ENCODE measurements at regions of chr18 and their contacts with region 1.

Region 1: GRCh38 chr18:75209129-75209950 is at the start of gene PTGR3:
- DNase-seq: peak; percentile 40
- ATAC-seq: peak; percentile 56
- H3K4me3 ChIP-seq: peak within 1 kb of the TSS; percentile 96
- H3K27ac ChIP-seq: peak within 1 kb of the TSS; percentile 86
- H3K4me1 ChIP-seq: peaks cover 6% of the 10 kb centered on the region; the same call in 1 of the 2 replicates
- H3K27me3 ChIP-seq: no peaks in the 10 kb centered on the region
- CTCF ChIP-seq: no peak
- EP300 ChIP-seq: no peak
- POLR2A ChIP-seq: peak; percentile 74
- RAD21 ChIP-seq: no peak
- polyA plus RNA-seq, gene PTGR3: 6.2 to 8.8 TPM

Region 2: DNA sequence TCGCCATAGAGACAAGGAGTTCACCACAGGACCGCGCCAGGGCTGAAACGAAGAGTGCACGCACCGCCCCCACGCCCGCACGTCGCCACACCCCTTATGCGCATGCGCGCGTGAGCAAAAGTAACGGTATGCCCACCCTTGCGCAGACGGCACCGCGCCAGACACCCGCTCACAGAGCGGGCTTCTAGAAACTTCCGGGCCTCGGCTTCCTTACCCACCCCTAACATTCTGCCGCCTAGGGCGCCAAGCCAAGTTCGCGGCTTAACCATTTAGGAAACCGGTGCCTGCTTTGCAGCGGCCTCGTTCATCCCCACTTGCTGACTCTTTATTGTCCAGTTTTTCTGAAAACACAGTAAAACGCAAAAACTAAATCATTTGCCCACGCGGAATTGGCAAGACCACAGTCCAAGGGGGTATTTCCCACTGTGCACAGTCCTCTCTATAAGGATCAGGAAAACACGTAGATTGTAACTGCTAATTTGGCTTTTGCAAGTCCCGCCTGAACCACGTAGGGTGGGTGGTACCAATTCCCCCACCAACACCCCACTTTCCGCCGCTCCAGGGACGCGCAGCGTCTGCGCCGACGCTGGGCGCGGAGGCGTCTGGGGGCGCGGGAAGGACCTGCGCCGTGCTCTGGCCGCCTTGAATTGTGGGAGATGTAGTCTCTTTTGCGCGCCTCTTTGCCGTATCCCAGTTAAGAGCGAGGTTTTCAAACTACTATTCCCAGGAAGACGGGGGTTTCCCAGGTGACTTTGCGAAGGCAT is 1061.4 kb before region 1 on chr18 and contains the starts of genes FBXO15 and TIMM21:
- CTCF ChIA-PET with region 1: no interaction called
- POLR2A ChIA-PET with region 1: no interaction called
- RAD21 ChIA-PET with region 1: no interaction called
- SMC1A ChIA-PET with region 1: no interaction called
- in situ Hi-C with region 1: no loop called
- intact Hi-C with region 1: loop called (anchors 5 kb)
- DNase-seq: peak; percentile 94
- ATAC-seq: peak; percentile 93
- H3K4me3 ChIP-seq: peak within 1 kb of the TSS; percentile 92
- H3K27ac ChIP-seq: peak within 1 kb of the TSS; percentile 88
- H3K4me1 ChIP-seq: peaks cover 6% of the 10 kb centered on the region; the same call in 1 of the 2 replicates
- H3K27me3 ChIP-seq: no peaks in the 10 kb centered on the region
- CTCF ChIP-seq: no peak
- EP300 ChIP-seq: no peak
- POLR2A ChIP-seq: peak; percentile 77
- RAD21 ChIP-seq: no peak
- polyA plus RNA-seq, gene FBXO15: 0.20 to 0.24 TPM
- polyA plus RNA-seq, gene TIMM21: 111 to 136 TPM

Region 3: DNA sequence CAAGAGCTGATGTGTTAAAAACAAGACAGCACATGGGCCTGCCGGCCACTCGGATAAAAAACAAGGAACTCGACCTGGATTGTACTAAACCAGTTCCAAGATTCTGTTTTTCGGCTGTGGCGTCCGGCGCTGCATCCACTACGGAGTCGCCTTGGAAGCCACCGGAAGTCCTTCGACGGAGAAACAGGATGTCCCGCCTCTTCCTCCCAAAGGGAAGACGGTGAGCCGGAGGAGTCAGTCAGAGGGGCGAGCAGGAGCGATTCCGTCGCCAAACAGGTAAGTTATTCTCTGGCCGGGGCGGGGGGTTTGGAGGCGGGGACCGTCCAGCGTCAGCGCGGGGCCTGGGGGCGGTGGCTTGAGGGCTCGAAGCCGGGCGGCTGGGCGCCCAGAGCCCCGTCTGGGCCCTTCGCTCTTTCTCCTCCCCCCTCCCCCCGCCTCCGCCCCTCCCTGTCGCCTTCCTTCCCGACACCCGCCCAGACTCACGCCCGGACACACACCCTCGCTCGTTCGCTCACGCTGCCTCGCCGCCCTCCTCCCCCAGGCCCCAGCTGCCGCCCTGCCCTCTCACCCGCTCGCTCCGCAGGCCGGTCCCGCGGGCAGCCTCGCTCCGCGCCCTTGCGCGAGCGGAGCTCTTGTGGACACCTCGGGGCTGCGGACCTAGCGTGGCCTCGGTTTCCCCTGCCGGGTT is 611.5 kb before region 1 on chr18 and contains the start of gene ZNF407:
- CTCF ChIA-PET with region 1: no interaction called
- POLR2A ChIA-PET with region 1: interaction called, 4 read pairs
- RAD21 ChIA-PET with region 1: no interaction called
- SMC1A ChIA-PET with region 1: no interaction called
- in situ Hi-C with region 1: no loop called
- intact Hi-C with region 1: loop called (anchors 5 kb)
- DNase-seq: peak; percentile 61
- ATAC-seq: peak; percentile 90
- H3K4me3 ChIP-seq: peak within 1 kb of the TSS; percentile 99
- H3K27ac ChIP-seq: peak within 1 kb of the TSS; percentile 99
- H3K4me1 ChIP-seq: peaks cover 7% of the 10 kb centered on the region
- H3K27me3 ChIP-seq: no peaks in the 10 kb centered on the region
- CTCF ChIP-seq: no peak
- EP300 ChIP-seq: no peak
- POLR2A ChIP-seq: peak; percentile 70; the same call in 1 of the 2 replicates
- RAD21 ChIP-seq: no peak
- polyA plus RNA-seq, gene ZNF407: 0.69 to 0.88 TPM

Region 4: DNA sequence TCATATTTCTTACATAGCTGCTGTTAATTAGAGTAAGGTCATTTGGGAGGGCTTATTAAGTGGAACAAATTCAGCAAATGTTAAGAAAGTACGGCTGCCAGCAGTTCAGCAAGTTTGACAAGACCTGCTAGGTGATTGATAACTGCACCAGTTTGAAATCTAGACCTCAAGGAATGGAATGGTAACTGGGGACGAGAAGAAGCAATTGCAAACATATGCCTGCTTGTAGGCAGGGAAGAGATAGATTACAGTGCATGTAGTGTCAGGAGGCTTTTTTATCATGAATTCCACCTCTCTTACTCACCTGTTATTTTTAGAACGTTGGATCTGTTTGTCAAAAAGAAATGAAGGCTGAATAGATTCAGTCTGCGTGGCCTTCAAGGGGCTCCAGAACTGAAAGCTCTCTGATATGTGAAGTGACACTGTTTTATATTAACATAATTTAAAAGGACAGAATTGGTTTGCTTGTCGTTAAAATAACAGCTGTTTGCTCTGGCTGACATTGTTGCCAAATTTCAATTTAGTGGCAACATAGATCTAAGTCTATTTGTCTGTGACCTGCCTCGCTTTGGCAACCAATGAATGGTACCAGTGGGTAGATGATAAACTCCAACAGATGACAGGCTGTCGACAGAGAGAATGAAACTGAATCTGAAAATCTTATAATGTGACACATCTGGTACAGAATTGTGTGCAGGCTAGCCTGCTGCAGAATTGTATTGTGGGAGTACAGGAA is 412.3 kb before region 1 on chr18:
- CTCF ChIA-PET with region 1: no interaction called
- POLR2A ChIA-PET with region 1: no interaction called
- RAD21 ChIA-PET with region 1: no interaction called
- SMC1A ChIA-PET with region 1: no interaction called
- in situ Hi-C with region 1: no loop called
- intact Hi-C with region 1: loop called (anchors 10 kb)
- DNase-seq: peak; percentile 40
- ATAC-seq: peak; percentile 99
- H3K4me3 ChIP-seq: peak overlapping the region; percentile 51
- H3K27ac ChIP-seq: 0 out of 2 replicates have a peak overlapping the region, but pooled peaks have one; percentile 17
- H3K4me1 ChIP-seq: peaks cover 16% of the 10 kb centered on the region; the same call in 1 of the 2 replicates
- H3K27me3 ChIP-seq: no peaks in the 10 kb centered on the region
- CTCF ChIP-seq: no peak
- EP300 ChIP-seq: no peak; a peak in 1 of 4 replicates
- POLR2A ChIP-seq: no peak
- RAD21 ChIP-seq: no peak

Region 5: DNA sequence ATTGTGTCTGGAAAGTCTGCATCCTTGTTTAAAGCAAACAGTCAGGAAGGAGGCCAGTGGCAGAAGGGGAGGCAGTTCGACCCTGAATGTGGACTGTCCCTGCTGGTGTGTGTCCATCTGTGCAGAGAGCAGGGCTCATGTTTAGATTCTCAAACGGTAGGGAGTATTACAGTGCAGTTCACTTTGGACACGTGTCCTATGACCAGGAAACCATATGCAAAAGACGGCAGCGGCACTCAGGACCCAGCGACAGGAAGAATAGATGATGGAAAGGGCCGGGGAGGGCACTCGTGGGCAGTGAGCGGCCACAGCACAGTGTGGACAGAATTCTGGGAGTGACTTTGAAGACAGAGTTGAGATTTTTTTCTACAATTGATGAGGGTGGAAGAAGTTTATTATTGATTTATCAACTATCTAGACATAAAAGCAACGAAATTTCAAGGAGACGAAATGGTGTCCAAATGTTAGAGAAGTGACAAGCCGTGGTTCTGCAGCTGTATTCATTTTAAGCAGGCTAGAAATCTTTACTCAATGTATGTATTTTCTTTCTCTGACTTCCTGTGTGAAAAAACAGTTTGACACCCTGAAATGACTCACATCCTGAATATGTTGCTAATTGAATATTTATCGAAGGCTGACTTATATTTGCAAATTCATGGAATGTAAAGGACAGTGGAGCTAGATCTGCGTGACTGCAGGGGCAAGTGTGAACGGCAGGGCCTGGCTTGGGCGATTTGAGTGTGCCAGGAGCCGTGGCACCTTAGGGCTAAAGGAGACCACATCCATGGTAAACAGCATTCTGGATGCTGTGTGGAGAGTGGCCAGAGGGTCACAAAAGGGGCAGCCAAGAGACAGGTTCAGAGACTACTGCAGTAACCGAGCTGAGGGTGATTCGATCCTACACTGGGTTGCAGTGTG is 214.6 kb before region 1 on chr18:
- CTCF ChIA-PET with region 1: interaction called, 5 read pairs
- POLR2A ChIA-PET with region 1: interaction called, 8 read pairs
- RAD21 ChIA-PET with region 1: interaction called, 5 read pairs
- SMC1A ChIA-PET with region 1: no interaction called
- in situ Hi-C with region 1: no loop called
- intact Hi-C with region 1: loop called (anchors 10 kb)
- DNase-seq: peak; percentile 35
- ATAC-seq: peak; percentile 91
- H3K4me3 ChIP-seq: peak overlapping the region; percentile 42; the same call in 1 of the 2 replicates
- H3K27ac ChIP-seq: peak overlapping the region; percentile 88
- H3K4me1 ChIP-seq: peaks cover 20% of the 10 kb centered on the region
- H3K27me3 ChIP-seq: no peaks in the 10 kb centered on the region
- CTCF ChIP-seq: no peak
- EP300 ChIP-seq: peak; percentile 27 to 81; a peak in 2 of 4 replicates
- POLR2A ChIP-seq: no peak; the same call in 1 of the 2 replicates
- RAD21 ChIP-seq: no peak

Region 6: GRCh38 chr18:75173125-75173432 is 36.3 kb before region 1 on chr18:
- CTCF ChIA-PET with region 1: interaction called, 4 read pairs
- POLR2A ChIA-PET with region 1: interaction called, 9 read pairs
- RAD21 ChIA-PET with region 1: interaction called, 5 read pairs
- SMC1A ChIA-PET with region 1: interaction called, 4 read pairs
- in situ Hi-C with region 1: no loop called
- intact Hi-C with region 1: loop called (anchors 5 kb)
- DNase-seq: peak; percentile 64
- ATAC-seq: peak; percentile 100
- H3K4me3 ChIP-seq: no peak overlapping the region
- H3K27ac ChIP-seq: no peak overlapping the region
- H3K4me1 ChIP-seq: peaks cover 15% of the 10 kb centered on the region
- H3K27me3 ChIP-seq: no peaks in the 10 kb centered on the region
- CTCF ChIP-seq: peak; percentile 44 to 66 (median 49); a peak in 5 of 6 replicates
- EP300 ChIP-seq: peak in 1 of 2 experiments; percentile 85; a peak in 2 of 4 replicates
- POLR2A ChIP-seq: no peak
- RAD21 ChIP-seq: peak; percentile 62

Region 7: DNA sequence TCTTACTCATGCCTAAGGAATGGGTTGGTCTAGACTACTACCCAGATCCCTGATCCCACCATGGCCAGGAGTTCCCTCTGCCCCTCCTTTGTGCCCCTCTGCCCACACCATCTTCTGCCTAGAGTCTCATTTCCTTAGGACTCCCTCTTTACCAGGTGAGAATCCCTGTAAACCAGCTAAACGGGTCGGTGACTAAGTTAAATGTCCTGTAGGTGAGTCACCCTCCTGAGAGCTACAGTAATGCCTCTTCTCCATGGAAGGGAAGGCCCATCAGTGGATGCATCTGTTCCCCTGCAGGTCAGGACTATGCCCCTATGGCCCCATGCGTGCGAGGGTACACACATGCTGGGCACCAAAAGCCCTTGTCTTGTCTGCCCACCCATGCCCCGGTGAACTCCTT is 25.8 kb before region 1 on chr18:
- CTCF ChIA-PET with region 1: no interaction called
- POLR2A ChIA-PET with region 1: no interaction called
- RAD21 ChIA-PET with region 1: no interaction called
- SMC1A ChIA-PET with region 1: no interaction called
- in situ Hi-C with region 1: no loop called
- intact Hi-C with region 1: no loop called
- DNase-seq: no peak
- ATAC-seq: no peak
- H3K4me3 ChIP-seq: no peak overlapping the region
- H3K27ac ChIP-seq: no peak overlapping the region
- H3K4me1 ChIP-seq: no peaks in the 10 kb centered on the region
- H3K27me3 ChIP-seq: no peaks in the 10 kb centered on the region
- CTCF ChIP-seq: no peak
- EP300 ChIP-seq: no peak
- POLR2A ChIP-seq: no peak
- RAD21 ChIP-seq: no peak

Region 8: GRCh38 chr18:75364512-75365253 is 155.3 kb after region 1 on chr18:
- CTCF ChIA-PET with region 1: no interaction called
- POLR2A ChIA-PET with region 1: no interaction called
- RAD21 ChIA-PET with region 1: no interaction called
- SMC1A ChIA-PET with region 1: no interaction called
- in situ Hi-C with region 1: no loop called
- intact Hi-C with region 1: no loop called
- DNase-seq: no peak
- ATAC-seq: peak; percentile 31
- H3K4me3 ChIP-seq: no peak overlapping the region
- H3K27ac ChIP-seq: no peak overlapping the region
- H3K4me1 ChIP-seq: no peaks in the 10 kb centered on the region
- H3K27me3 ChIP-seq: no peaks in the 10 kb centered on the region; a peak in 1 of 4 replicates
- CTCF ChIP-seq: no peak
- EP300 ChIP-seq: no peak
- POLR2A ChIP-seq: no peak
- RAD21 ChIP-seq: no peak

Region 9: DNA sequence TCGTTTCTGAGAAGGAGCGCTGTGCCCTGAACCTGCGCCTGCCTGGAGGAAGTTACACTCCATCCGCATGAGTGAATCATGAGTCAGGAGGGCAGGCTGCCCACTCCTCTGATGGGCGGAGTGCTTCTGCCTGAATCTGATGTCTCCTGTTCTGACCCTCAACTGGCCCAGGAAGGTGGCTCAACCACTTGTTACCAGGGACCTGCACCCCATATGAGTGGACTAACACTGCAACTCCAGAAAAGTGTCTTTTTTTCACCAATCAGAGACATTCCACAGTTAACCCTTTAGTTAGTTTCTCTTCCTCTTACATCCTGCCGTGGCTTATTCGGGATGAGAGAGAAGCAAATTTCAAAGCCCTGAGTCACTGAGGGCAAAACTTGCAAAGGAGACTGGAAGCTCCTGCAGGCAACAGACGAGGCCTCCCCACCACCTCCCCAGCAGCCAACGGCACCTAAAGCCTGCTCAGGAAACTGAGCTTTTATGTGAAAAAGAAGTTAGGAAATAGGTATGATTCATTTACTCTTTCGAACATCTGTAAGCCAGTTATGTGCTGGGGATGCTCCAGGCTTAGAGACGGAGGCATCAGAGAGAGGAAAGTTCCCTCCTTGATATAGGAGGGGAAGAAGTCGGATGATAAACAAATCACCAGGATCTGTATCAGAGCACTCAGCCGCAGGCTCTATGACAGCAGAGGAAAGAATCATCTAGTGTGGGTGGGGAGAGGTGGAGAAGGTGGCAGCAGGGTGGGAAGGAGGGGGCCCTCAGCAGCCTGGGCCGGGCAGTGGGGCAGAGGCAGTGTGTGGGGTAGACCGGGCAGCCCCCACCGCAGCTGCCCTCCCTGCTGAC is 1892.3 kb after region 1 on chr18:
- CTCF ChIA-PET with region 1: no interaction called
- POLR2A ChIA-PET with region 1: no interaction called
- RAD21 ChIA-PET with region 1: no interaction called
- SMC1A ChIA-PET with region 1: no interaction called
- in situ Hi-C with region 1: loop called (anchors 25 kb)
- intact Hi-C with region 1: no loop called
- DNase-seq: peak; percentile 61
- ATAC-seq: peak; percentile 86
- H3K4me3 ChIP-seq: peak overlapping the region; percentile 56
- H3K27ac ChIP-seq: peak overlapping the region; percentile 99
- H3K4me1 ChIP-seq: peaks cover 80% of the 10 kb centered on the region
- H3K27me3 ChIP-seq: no peaks in the 10 kb centered on the region
- CTCF ChIP-seq: no peak
- EP300 ChIP-seq: 0 out of 4 replicates have a peak, but pooled peaks of 1 of the 2 experiments have one; percentile 52
- POLR2A ChIP-seq: peak; percentile 56
- RAD21 ChIP-seq: no peak

Measured in GM12878 (cell line).